ENCODE measurements at regions of chr15 and their contacts with region 1.

Region 1: DNA sequence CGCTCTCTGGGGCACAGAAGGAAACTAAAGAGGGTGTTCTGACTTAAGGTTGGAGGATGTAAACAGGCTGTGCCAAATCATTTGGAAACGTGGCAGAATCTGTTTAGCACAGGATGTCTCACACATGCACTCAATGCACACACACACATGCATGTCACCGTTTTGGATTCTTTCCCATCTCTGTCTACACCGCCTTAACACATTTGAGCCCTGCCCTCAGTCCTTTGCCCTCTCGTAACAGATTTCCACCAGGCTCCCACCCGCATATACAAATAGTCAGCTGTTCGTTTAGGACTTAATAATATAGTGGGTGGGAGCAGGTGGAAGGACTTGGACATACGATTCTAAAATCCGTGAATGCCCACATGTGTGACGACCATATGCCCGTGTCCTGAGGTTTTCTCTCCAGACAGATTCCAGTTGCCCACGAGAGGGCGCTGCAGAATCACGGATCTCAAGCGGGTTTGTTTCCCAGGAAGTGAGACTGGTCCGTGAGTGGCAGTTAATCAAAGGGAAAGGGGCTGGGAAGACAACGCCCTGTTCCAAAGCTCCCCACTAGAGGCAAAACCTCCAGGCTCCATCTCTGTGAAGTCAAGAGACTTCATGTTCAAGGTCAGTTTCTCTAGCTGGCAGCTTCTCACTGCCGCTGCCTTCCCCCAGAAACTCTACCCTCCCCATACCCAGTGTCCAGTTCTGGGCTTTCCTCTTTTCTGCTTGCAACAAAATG is 44.5 kb downstream of the NOX5 start:
- DNase-seq: peak; percentile 59 to 66 (median 62)
- H3K4me3 ChIP-seq: no peak overlapping the region
- H3K4me3 Mint-ChIP-seq: peak overlapping the region in 5 of 8 donors; percentile 40 to 62 (median 56)
- H3K27ac ChIP-seq: no peak overlapping the region
- H3K27ac Mint-ChIP-seq: peak overlapping the region in 5 of 7 donors; percentile 19 to 81 (median 27)
- H3K4me1 ChIP-seq: peaks cover 34% of the 10 kb centered on the region
- H3K4me1 Mint-ChIP-seq: peaks cover 23 to 43% (median 31%) of the 10 kb centered on the region in 4 donors
- H3K27me3 ChIP-seq: no peaks in the 10 kb centered on the region
- H3K27me3 Mint-ChIP-seq: peaks cover 4 to 8% of the 10 kb centered on the region in 2 donors

Region 2: GRCh38 chr15:68972201-68973065 is 86.6 kb before region 1 on chr15:
- CTCF ChIA-PET with region 1: no interaction called
- POLR2A ChIA-PET with region 1: no interaction called
- intact Hi-C with region 1: no loop called
- DNase-seq: no peak
- H3K4me3 ChIP-seq: no peak overlapping the region
- H3K4me3 Mint-ChIP-seq: no peak overlapping the region
- H3K27ac ChIP-seq: no peak overlapping the region
- H3K27ac Mint-ChIP-seq: no peak overlapping the region
- H3K4me1 ChIP-seq: no peaks in the 10 kb centered on the region
- H3K4me1 Mint-ChIP-seq: no peaks in the 10 kb centered on the region
- H3K27me3 ChIP-seq: no peaks in the 10 kb centered on the region
- H3K27me3 Mint-ChIP-seq: peaks cover 21 to 28% of the 10 kb centered on the region in 2 donors

Region 3: DNA sequence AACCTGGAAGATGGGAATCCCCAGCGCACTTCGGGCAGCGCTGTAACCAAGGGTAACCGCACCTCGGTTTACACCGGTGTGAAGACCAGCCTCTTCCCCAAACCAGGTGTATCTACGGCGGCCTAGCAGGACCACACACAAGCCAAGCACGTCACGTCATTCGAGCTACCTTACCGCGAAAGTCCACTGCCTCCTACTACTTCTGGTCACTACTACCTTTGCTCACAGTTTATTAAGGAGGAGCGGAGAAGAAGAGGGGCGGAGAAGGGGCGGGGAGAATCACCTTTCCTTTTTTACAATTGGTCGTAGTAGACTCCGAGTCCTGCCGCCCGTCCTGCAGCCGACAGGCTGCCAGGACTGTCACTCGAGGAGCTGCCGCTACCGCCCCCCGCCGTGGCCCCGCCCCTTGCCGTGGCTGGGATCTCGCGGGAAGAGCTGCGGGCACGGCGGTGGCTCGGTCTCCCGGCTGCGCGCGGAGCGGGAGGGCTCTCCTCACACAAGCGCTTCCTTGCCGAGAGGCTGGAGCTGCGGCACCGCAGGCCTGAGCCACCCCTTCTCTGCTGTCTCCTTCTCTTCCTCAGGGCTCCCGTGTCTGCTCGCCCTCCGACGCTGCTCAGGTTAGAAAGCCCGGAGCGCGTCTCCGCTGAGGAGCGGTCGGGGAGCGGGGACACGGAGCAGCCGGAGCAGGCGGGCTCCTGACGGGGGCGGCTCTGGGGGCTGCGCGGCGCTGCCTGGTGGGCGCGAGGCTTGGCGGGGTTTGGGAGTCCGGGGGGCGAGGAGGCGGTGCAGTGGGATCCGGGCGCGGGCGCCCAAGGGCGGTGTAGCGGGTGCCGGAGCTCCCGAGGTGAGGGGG is 101.4 kb after region 1 on chr15 and contains the start of gene GLCE:
- CTCF ChIA-PET with region 1: interaction called, 3 read pairs
- POLR2A ChIA-PET with region 1: interaction called, 4 read pairs
- intact Hi-C with region 1: loop called (anchors 1 kb)
- DNase-seq: peak; percentile 92 to 96 (median 94)
- H3K4me3 ChIP-seq: peak within 1 kb of the TSS; percentile 53 to 70
- H3K4me3 Mint-ChIP-seq: peak within 1 kb of the TSS; percentile 94 to 99 (median 97)
- H3K27ac ChIP-seq: peak within 1 kb of the TSS; percentile 65
- H3K27ac Mint-ChIP-seq: peak within 1 kb of the TSS; percentile 86 to 97 (median 95)
- H3K4me1 ChIP-seq: peaks cover 14% of the 10 kb centered on the region
- H3K4me1 Mint-ChIP-seq: peaks cover 18 to 32% (median 23%) of the 10 kb centered on the region in 4 donors
- H3K27me3 ChIP-seq: no peaks in the 10 kb centered on the region
- H3K27me3 Mint-ChIP-seq: peaks cover 0 to 8% of the 10 kb centered on the region in 2 donors
- total RNA-seq, gene GLCE: 7.2 TPM

Region 4: GRCh38 chr15:69225355-69226025 is 166.5 kb after region 1 on chr15:
- CTCF ChIA-PET with region 1: interaction called, 16 read pairs
- POLR2A ChIA-PET with region 1: interaction called, 3 read pairs
- intact Hi-C with region 1: loop called (anchors 2 kb)
- DNase-seq: no peak
- H3K4me3 ChIP-seq: no peak overlapping the region
- H3K4me3 Mint-ChIP-seq: no peak overlapping the region
- H3K27ac ChIP-seq: no peak overlapping the region
- H3K27ac Mint-ChIP-seq: no peak overlapping the region
- H3K4me1 ChIP-seq: no peaks in the 10 kb centered on the region
- H3K4me1 Mint-ChIP-seq: no peaks in the 10 kb centered on the region
- H3K27me3 ChIP-seq: no peaks in the 10 kb centered on the region
- H3K27me3 Mint-ChIP-seq: no peaks in the 10 kb centered on the region

Region 5: GRCh38 chr15:69394556-69395282 is 335.7 kb after region 1 on chr15:
- CTCF ChIA-PET with region 1: interaction called, 100 read pairs
- POLR2A ChIA-PET with region 1: no interaction called
- intact Hi-C with region 1: loop called (anchors 1 kb)
- DNase-seq: peak; percentile 61 to 75 (median 68)
- H3K4me3 ChIP-seq: no peak overlapping the region
- H3K4me3 Mint-ChIP-seq: peak overlapping the region in 2 of 8 donors; percentile 26 to 29
- H3K27ac ChIP-seq: no peak overlapping the region
- H3K27ac Mint-ChIP-seq: peak overlapping the region in 1 of 7 donors; percentile 11
- H3K4me1 ChIP-seq: peaks cover 6% of the 10 kb centered on the region
- H3K4me1 Mint-ChIP-seq: peaks cover 5 to 16% (median 7%) of the 10 kb centered on the region in 4 donors
- H3K27me3 ChIP-seq: no peaks in the 10 kb centered on the region
- H3K27me3 Mint-ChIP-seq: peaks cover 6 to 10% of the 10 kb centered on the region in 2 donors